T-cell (primary cell): ENCODE measurements at regions of chr1 and their contacts with region 1.

Region 1: GRCh38 chr1:200971955-200972711 is 51.4 kb downstream of the KIF21B start:
- DNase-seq: peak; percentile 13 to 72 (median 62)
- ATAC-seq: peak; percentile 43 to 65 (median 54)
- H3K4me3 ChIP-seq: no peak overlapping the region
- H3K4me3 Mint-ChIP-seq: no peak overlapping the region
- H3K27ac ChIP-seq: no peak overlapping the region
- H3K27ac Mint-ChIP-seq: no peak overlapping the region
- H3K4me1 ChIP-seq: no peaks in the 10 kb centered on the region
- H3K4me1 Mint-ChIP-seq: peaks cover 0 to 8% (median 2%) of the 10 kb centered on the region in 3 donors
- H3K27me3 ChIP-seq: no peaks in the 10 kb centered on the region
- H3K27me3 Mint-ChIP-seq: no peaks in the 10 kb centered on the region

Region 2: DNA sequence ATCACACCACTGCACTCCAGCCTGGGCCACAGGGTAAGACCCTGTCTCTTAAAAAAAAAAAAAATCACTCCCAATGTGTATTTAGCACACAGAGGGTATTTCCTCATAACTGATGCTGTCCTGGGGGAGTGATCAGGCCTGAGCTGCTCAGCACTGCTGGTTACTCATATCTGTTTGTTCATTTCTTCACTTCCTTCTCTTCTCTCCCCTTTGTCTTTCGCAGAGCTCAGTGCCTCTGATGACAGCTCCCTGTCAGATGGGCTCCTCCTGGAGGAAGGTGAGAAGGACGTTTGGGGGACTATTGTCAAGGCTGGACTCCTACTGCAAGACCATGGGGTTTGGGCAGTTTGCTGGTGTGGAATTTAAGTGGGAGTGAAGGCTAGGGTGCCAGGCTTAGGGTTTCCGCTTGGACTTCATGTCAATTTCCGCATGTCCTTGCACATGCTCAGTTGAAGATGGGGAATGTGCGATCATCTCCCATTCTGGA is 64.5 kb before region 1 on chr1:
- CTCF ChIA-PET with region 1: no interaction called
- POLR2A ChIA-PET with region 1: no interaction called
- DNase-seq: no peak
- ATAC-seq: no peak
- H3K4me3 ChIP-seq: no peak overlapping the region
- H3K4me3 Mint-ChIP-seq: no peak overlapping the region
- H3K27ac ChIP-seq: no peak overlapping the region
- H3K27ac Mint-ChIP-seq: no peak overlapping the region
- H3K4me1 ChIP-seq: peaks cover 3 to 30% of the 10 kb centered on the region in 2 experiments
- H3K4me1 Mint-ChIP-seq: peaks cover 19 to 32% (median 23%) of the 10 kb centered on the region in 3 donors
- H3K27me3 ChIP-seq: peaks cover 0 to 27% of the 10 kb centered on the region in 2 experiments
- H3K27me3 Mint-ChIP-seq: peaks cover 0 to 3% of the 10 kb centered on the region in 2 donors

Region 3: DNA sequence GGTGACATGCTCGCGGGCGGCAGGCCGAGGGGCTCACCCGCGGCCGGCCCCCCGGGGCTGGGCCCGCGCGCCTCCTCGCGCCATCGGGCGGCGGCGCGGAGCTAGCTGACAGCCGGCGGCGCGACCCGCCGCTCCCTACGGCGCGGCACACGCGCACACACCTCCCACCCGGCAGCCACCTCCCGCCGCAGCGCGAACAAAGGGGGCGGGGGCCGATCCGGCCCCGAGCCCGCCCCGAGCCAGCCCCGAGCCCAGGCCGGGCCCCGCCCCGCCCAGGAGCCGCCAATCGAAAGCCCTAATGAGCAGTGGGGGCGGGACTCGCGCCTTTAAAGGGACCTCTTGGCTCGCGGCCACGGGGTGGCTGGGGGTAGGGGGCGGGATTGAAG is 51.4 kb after region 1 on chr1 and contains the start of gene KIF21B:
- CTCF ChIA-PET with region 1: interaction called, 7 to 15 read pairs
- POLR2A ChIA-PET with region 1: no interaction called
- DNase-seq: peak; percentile 82 to 94 (median 90)
- ATAC-seq: peak; percentile 81 to 88 (median 82)
- H3K4me3 ChIP-seq: peak within 1 kb of the TSS; percentile 80 to 94
- H3K4me3 Mint-ChIP-seq: peak within 1 kb of the TSS; percentile 89 to 99 (median 98)
- H3K27ac ChIP-seq: peak within 1 kb of the TSS; percentile 88
- H3K27ac Mint-ChIP-seq: peak within 1 kb of the TSS; percentile 99 to 100
- H3K4me1 ChIP-seq: peaks cover 42 to 70% of the 10 kb centered on the region in 2 experiments
- H3K4me1 Mint-ChIP-seq: peaks cover 66 to 73% (median 73%) of the 10 kb centered on the region in 3 donors
- H3K27me3 ChIP-seq: no peaks in the 10 kb centered on the region
- H3K27me3 Mint-ChIP-seq: no peaks in the 10 kb centered on the region
- total RNA-seq, gene KIF21B: 70.8 to 110 (median 101) TPM

Region 4: GRCh38 chr1:201036188-201036842 is 64.2 kb after region 1 on chr1:
- CTCF ChIA-PET with region 1: interaction called, 45 to 49 read pairs
- POLR2A ChIA-PET with region 1: no interaction called
- DNase-seq: no peak
- ATAC-seq: no peak
- H3K4me3 ChIP-seq: no peak overlapping the region
- H3K4me3 Mint-ChIP-seq: no peak overlapping the region
- H3K27ac ChIP-seq: no peak overlapping the region
- H3K27ac Mint-ChIP-seq: no peak overlapping the region
- H3K4me1 ChIP-seq: no peaks in the 10 kb centered on the region
- H3K4me1 Mint-ChIP-seq: no peaks in the 10 kb centered on the region
- H3K27me3 ChIP-seq: no peaks in the 10 kb centered on the region
- H3K27me3 Mint-ChIP-seq: no peaks in the 10 kb centered on the region